ENCODE measurements at regions of chr6 and their contacts with region 1.

Region 1: DNA sequence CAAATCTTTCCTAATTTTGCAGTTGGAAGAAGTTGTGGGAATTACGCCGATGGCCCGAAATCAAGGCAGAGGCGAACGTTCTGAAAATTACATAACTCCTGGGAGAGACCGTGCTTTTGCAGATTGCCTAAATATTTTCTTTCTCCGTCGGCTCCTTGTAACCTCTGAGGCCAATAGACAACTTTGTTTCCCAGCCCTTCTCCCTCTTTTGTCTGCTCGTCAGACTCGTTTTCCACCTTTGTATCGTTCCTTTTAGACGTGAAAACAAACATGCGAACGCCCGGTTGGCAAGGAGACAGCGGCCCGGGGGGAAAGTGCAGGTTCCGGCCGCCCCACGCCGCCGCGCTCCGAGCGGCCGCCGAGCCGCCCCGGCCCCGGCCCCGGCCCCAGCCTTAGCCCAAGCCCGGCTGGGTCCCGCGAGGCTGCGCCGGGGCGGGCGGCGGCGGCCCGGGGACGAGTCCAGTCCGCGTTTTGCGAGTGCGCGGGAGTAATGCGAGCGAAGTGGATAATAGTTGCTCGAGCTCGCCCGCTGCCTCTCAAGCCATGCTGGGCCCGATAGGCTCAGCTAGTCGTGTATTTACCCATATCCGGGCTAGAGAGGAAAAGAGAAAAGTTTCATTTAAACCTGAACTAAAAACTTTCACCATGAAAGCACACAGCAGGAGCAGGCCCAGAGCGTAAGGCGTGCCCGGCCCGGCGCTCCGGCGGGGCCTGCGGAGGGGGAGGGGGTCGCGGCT is at the start of gene ARID1B:
- DNase-seq: peak; percentile 75
- H3K4me3 Mint-ChIP-seq: peak within 1 kb of the TSS; percentile 97
- H3K27ac Mint-ChIP-seq: peak within 1 kb of the TSS; percentile 98
- H3K4me1 Mint-ChIP-seq: peaks cover 52% of the 10 kb centered on the region
- H3K27me3 Mint-ChIP-seq: peaks cover 3% of the 10 kb centered on the region
- total RNA-seq, gene ARID1B: 73.6 and 79.1 TPM in 2 replicates

Region 2: GRCh38 chr6:156719720-156720563 is 57.1 kb before region 1 on chr6:
- intact Hi-C with region 1: loop called (anchors 1 kb)
- DNase-seq: peak; percentile 43
- H3K4me3 Mint-ChIP-seq: peak overlapping the region; percentile 75
- H3K27ac Mint-ChIP-seq: peak overlapping the region; percentile 44
- H3K4me1 Mint-ChIP-seq: peaks cover 12% of the 10 kb centered on the region
- H3K27me3 Mint-ChIP-seq: peaks cover 6% of the 10 kb centered on the region

Region 3: GRCh38 chr6:156752666-156753301 is 24.2 kb before region 1 on chr6:
- intact Hi-C with region 1: no loop called
- DNase-seq: no peak
- H3K4me3 Mint-ChIP-seq: no peak overlapping the region
- H3K27ac Mint-ChIP-seq: no peak overlapping the region
- H3K4me1 Mint-ChIP-seq: no peaks in the 10 kb centered on the region
- H3K27me3 Mint-ChIP-seq: peaks cover 3% of the 10 kb centered on the region

Region 4: DNA sequence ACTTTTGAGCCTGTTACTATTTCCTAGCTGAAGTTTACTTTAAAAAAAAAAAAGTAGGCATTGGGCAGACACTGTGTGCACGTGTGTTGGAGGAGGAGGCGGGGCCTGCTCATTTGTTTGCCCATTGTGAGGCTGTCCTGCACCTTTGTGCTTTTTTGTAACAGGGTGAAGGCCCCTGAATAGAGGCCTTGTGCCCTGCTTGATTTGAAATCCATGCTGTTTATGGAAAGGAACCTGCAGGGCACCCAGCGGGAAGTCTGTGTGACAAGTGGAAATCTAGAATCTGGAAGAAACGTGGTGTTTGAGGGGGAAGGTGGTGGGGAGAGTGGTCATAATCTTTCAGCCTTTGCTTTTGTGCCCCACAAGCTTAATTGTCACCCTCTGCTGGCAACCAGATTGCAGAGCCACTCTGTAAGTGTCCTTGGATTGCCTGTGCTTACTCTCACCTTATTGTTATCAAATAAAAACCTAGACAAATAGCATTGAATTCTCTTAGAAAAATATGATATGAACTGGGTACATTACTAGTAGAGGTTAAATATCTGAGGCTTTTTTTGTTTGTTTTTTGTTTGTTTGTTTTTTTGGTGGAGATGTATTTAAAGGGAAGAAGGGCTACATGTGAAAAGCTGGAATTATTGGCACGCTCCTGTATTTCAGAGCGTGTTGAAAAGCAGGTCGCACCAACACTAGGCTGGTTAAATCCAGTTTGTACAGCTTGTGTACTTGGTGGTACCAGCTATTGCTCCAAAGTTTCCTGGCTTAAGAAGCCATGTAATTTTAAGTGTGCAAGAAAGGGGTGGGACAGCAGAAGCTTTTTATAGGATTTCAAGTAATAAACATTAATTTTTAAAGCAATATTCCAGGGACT is 156.4 kb after region 1 on chr6:
- intact Hi-C with region 1: loop called (anchors 1 kb)
- DNase-seq: no peak
- H3K4me3 Mint-ChIP-seq: no peak overlapping the region
- H3K27ac Mint-ChIP-seq: no peak overlapping the region
- H3K4me1 Mint-ChIP-seq: peaks cover 45% of the 10 kb centered on the region
- H3K27me3 Mint-ChIP-seq: no peaks in the 10 kb centered on the region

Region 5: GRCh38 chr6:156976216-156977127 is 199.5 kb after region 1 on chr6:
- intact Hi-C with region 1: loop called (anchors 5 kb)
- DNase-seq: no peak
- H3K4me3 Mint-ChIP-seq: peak overlapping the region; percentile 76
- H3K27ac Mint-ChIP-seq: peak overlapping the region; percentile 64
- H3K4me1 Mint-ChIP-seq: peaks cover 57% of the 10 kb centered on the region
- H3K27me3 Mint-ChIP-seq: peaks cover 2% of the 10 kb centered on the region

Region 6: DNA sequence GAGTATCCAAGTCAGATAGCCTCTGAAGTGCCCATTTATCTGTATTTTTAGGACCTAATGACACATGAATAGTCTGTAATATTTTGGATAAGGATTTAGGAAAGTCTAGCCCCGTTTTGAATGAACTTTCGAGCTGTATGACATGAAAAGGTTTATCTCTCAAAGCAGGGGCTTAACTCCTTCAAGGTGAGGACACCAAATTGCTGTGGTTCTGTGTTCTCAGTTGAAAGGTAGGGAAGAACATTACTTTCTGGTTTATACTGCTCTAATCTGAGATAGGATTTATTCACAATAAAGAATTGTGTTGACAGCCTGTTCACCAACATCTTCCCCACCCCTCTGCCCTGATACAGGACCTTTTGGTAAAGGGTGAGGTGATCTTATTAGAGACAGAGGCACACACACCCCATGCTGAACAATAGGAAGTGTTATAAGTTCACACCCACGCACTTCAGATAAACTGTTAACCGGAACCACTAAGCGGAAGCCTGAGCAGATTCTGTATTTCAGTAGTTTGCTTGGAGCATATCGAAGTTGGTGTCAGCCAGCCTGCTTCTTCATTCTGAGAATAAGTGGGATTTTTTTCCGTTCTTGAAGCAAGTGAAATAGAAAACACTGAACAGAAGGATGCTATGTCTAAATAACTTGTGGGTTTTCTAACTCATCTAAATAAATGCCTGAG is 323.0 kb after region 1 on chr6:
- intact Hi-C with region 1: loop called (anchors 1 kb)
- DNase-seq: peak; percentile 58
- H3K4me3 Mint-ChIP-seq: peak overlapping the region; percentile 63
- H3K27ac Mint-ChIP-seq: peak overlapping the region; percentile 86
- H3K4me1 Mint-ChIP-seq: peaks cover 57% of the 10 kb centered on the region
- H3K27me3 Mint-ChIP-seq: no peaks in the 10 kb centered on the region

Region 7: DNA sequence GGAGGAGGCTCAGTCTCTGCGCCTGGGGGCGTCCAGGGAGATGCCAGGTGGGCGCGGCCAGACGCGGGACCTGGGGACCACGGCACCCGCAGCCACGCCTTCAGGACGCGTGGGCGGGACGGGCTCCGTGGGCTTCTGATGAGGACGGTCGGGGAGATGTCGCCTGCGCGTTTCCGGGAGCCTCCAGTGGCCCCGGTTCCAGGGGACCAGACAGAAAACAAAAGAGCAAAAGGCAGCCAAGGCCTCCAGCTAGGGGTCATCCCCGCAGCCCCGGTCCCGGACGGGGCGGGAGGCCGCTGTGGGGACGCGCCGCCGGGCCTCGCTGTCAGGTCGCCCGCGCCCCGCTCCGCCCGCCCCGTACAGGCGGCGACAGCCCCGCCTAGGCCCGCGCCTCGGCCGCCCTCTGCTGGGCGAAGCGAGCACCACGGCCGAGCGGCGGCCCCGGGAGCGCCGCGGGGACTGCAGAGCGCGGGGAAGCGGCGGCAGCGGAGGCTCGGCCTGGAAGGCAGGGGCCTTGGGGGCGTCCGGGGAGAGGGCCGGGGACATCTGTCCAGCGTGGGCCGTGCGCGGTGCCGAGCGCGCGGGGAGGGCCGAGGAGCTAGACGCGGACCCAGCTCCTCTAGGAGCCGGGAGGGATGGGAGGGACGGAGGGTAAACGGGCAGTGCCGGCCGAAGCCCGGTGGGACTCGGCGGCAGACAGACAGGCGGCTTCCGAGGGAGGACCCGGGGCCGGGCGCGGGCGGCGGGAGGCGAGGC is 497.6 kb after region 1 on chr6:
- intact Hi-C with region 1: loop called (anchors 1 kb)
- DNase-seq: peak; percentile 78
- H3K4me3 Mint-ChIP-seq: peak overlapping the region; percentile 86
- H3K27ac Mint-ChIP-seq: peak overlapping the region; percentile 67
- H3K4me1 Mint-ChIP-seq: peaks cover 4% of the 10 kb centered on the region
- H3K27me3 Mint-ChIP-seq: peaks cover 10% of the 10 kb centered on the region